Activated CD4-positive, alpha-beta memory T cell treated with anti-CD3 and anti-CD28 coated beads for 36 hours (primary cell): ENCODE measurements at regions of chr18 and their contacts with region 1.

Region 1: DNA sequence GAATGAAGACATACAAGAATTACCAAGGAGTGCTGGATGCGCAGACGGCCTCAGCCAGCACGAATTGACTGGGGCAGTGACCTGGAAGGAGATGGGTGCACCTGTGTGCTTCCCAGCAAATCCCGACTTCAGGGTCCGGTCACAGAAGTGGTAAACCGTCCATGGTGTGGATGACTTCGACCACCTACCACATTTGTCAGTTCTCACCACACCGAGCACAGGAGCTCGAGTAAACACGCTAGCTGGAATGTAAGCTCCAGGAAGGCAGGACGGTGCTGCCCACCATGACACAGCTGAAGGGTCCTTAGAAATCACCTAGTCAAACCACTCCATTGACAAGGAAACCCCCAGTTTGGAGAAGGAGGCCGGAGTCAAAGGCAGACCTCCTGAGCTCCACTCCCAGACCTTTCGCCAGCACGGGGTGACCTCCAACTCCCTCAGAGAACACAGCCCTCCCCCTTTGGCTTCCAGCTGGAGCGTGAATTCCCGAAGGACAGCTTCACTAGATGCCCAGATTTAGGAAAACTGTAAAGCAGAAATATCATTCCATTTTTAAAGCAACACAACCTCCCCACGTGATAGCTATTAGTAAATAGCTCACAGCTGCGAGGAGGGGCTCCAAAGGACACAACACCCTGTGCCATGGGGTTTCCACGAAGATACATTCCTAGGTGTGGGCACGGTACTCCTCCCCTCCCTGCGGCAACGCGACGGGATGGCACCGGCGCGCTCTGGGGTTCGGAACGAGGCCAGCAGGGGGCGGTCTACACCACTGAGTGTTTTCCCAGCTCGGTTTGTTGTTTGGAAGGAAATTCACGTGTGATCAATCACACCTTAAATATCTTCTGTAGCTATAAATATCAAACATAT is 34.1 kb upstream of the GNAL start:
- DNase-seq: peak; percentile 64
- H3K4me3 Mint-ChIP-seq: no peak overlapping the region
- H3K27ac Mint-ChIP-seq: no peak overlapping the region
- H3K4me1 Mint-ChIP-seq: peaks cover 5% of the 10 kb centered on the region
- H3K27me3 Mint-ChIP-seq: peaks cover 27% of the 10 kb centered on the region

Region 2: DNA sequence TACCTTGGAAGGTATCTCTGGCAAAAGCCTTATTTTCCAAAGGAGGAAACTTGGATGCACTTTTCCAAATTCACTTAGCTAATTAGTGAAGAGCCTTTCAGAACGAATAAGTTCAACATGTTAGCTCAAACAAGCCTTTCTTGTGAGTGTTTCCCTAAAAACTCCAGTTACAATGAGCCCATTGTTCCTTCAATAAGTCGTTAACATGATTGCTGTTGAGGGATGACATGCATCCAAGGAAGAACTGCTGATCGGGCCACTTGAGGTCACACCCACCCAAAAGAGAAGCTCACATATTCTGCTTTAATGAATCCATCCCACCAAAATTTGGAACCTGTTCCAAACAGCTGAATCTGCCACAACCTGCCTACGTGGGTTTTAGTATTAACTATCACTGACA is 93.7 kb before region 1 on chr18:
- CTCF ChIA-PET with region 1: no interaction called
- POLR2A ChIA-PET with region 1: no interaction called
- intact Hi-C with region 1: no loop called
- DNase-seq: no peak
- H3K4me3 Mint-ChIP-seq: no peak overlapping the region
- H3K27ac Mint-ChIP-seq: no peak overlapping the region
- H3K4me1 Mint-ChIP-seq: no peaks in the 10 kb centered on the region
- H3K27me3 Mint-ChIP-seq: peaks cover 1% of the 10 kb centered on the region

Region 3: DNA sequence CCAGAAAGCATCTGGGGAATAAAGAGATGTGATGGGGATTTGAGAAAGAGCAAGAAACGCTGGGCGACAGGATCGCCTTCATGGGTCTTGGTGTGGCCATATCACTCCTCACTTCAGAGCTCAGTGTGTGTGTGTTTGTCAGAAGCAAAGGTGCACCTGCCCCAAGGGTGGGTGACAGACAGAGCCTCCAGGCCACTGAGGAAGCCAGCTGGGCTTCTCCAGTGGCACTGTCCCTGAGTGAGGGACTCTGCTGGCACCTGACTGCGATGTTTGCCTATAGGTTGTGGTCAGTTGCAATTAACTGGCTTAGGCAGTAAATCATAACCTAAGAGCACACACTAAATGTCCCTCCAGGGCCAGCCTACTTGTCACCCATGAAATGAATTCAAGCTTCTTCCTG is 10.6 kb after region 1 on chr18:
- CTCF ChIA-PET with region 1: interaction called, 13 read pairs
- POLR2A ChIA-PET with region 1: no interaction called
- intact Hi-C with region 1: no loop called
- DNase-seq: no peak
- H3K4me3 Mint-ChIP-seq: no peak overlapping the region
- H3K27ac Mint-ChIP-seq: no peak overlapping the region
- H3K4me1 Mint-ChIP-seq: no peaks in the 10 kb centered on the region
- H3K27me3 Mint-ChIP-seq: peaks cover 5% of the 10 kb centered on the region